Head of caudate nucleus (tissue), 42 donors: ENCODE measurements at regions of chr3 and their contacts with region 1.

Region 1: DNA sequence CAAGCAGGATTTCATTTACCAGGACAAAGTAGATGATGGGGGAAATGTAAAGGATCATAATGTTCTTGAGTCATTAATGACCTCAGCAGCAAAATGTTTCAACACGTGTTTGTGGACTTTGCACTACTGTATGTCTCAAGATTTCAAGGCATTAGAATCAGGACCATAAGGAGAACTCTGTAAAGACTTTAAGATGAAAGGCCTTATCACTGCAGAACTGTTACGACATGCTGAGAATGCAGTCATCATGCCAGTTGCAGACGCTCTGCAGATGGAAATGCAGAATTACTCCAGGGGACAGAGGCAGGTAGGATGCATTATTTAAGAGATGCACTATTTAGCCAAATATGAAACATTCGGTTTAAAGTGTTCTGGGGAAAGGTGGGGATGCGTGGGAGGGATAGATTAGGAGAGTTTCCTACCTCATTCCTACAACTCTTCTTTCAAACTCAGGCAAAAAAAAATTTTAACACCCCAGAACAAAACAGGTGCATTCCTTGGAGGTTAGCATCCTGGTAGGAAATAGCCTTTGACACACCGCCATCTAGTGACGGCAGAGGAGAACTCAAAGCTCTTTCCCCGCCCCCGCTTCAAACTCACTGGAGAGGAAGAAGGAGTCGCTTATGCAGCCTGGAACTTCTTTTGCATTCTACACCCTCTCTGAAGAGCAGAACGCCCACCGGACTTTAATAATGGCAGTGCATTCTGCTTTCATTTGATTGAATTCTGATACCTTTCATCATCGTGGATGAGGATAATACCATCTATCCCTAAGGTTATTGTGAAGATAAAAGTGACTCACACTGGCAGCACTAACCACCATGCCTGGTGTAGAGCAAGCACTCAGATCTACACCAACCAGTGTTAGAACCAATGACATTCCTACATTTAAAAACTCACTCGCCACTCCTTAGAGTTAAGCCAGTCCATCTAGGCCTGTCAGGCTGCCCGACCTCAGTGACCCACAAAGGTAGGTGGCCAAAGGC is 43.1 kb upstream of the TOPAZ1 start:
- DNase-seq: peak; percentile 50 to 94 (median 82)

Region 2: GRCh38 chr3:43540624-43541023 is 658.0 kb before region 1 on chr3:
- intact Hi-C with region 1: loop called (anchors 10 kb)
- DNase-seq: no peak

Region 3: DNA sequence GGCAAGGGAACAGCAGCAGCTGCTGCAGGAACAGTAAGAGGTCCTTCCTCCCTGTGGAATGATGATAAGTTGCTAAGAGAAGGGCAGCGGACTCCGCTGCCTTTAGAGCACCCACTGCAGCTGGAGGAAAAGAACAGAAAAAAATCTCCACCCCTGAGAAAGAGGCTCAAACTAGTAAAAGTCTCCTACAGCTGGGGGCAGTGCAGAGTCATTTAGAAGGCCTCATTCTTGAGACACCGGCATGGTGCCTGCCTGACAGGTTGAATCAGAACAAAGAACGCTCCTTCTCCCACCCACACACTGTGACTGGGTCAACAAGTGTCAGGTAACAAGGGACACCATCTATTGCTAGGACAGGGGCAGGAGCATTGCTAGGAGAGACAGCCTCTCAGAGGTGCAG is 319.4 kb before region 1 on chr3:
- intact Hi-C with region 1: loop called (anchors 10 kb)
- DNase-seq: peak in 10 of 42 donors; percentile 11 to 71 (median 42)

Region 4: GRCh38 chr3:44077246-44077645 is 121.3 kb before region 1 on chr3:
- intact Hi-C with region 1: no loop called
- DNase-seq: peak in 1 of 42 donors; percentile 30